ENCODE measurements at regions of chr11 and their contacts with region 1.

Region 1: DNA sequence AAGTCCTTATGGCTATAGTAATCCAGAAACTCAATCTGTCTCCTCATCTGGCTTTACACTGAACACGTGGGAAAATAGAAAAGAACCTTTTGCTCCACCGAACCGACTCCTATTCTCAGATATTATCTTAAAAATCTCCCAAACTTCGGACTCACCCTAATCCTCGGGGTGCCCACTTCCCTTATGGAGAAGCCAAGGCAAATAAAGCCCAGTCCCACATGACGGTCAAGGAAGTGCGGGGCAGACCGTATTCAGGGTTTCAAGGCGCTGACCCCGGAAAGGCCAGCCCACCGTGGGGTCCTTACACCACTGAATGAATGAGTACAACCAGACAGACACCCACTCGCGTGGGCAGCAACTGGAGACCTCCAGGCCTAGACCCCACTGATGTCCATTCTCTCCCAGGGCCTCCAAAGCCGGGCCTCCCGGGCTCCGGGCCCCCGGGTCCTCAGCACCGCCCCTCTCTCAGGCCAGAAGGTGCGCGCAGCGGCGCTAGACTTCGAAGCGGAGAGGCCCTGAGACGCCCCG is 489 bp downstream of the NUP98 start:
- DNase-seq: no peak
- ATAC-seq: peak; percentile 25 to 47 (median 43)
- H3K4me3 ChIP-seq: peak overlapping the region; percentile 78 to 97
- H3K4me3 Mint-ChIP-seq: peak overlapping the region; percentile 89 to 97 (median 90)
- H3K27ac ChIP-seq: peak overlapping the region; percentile 94
- H3K27ac Mint-ChIP-seq: peak overlapping the region; percentile 91 to 97
- H3K4me1 ChIP-seq: peaks cover 24 to 39% of the 10 kb centered on the region in 2 experiments
- H3K4me1 Mint-ChIP-seq: peaks cover 52 to 53% (median 52%) of the 10 kb centered on the region in 3 donors
- H3K27me3 ChIP-seq: no peaks in the 10 kb centered on the region
- H3K27me3 Mint-ChIP-seq: no peaks in the 10 kb centered on the region

Region 2: DNA sequence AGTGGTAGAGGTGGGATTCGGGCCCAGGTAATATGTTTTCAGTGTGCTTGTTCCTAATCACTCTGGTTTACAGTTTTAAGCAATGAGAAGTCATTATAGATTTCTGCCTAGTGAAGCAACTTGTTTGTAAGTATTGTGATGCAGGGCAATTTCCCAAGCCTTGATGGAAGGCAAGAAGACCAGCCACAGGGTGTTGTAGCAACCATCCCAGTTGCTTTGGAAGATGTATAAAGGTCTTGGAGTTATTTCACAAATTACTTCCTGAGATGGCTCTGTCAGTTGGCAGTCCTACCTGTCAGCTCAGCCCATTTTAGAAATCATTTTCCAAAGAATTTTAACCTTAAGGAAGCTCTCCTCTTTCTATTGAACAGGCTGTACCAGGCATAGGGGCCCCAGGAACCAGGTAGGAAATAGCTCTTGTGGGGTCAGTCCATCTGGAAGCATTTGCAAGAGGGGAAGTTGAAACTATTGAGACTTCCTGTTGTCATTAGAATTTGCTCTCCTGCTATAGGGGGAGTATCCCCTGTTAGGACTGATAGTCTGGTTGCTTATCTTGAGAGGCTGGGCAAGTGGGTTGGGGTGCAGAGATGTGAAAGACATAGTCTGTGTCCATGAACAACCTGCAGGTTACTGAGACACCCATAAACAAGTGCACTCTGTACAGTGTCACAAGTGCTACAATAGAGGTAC is 106.5 kb after region 1 on chr11:
- CTCF ChIA-PET with region 1: no interaction called
- POLR2A ChIA-PET with region 1: interaction called in 1 of 2 experiments, 10 read pairs
- DNase-seq: no peak
- ATAC-seq: no peak
- H3K4me3 ChIP-seq: no peak overlapping the region
- H3K4me3 Mint-ChIP-seq: peak overlapping the region in 2 of 3 donors; percentile 14 to 52
- H3K27ac ChIP-seq: peak overlapping the region; percentile 54
- H3K27ac Mint-ChIP-seq: peak overlapping the region; percentile 88 to 89
- H3K4me1 ChIP-seq: peaks cover 41 to 52% of the 10 kb centered on the region in 2 experiments
- H3K4me1 Mint-ChIP-seq: peaks cover 78 to 80% (median 79%) of the 10 kb centered on the region in 3 donors
- H3K27me3 ChIP-seq: no peaks in the 10 kb centered on the region
- H3K27me3 Mint-ChIP-seq: no peaks in the 10 kb centered on the region

Measured in T-cell (primary cell).